Posterior vena cava (tissue), 2 donors: ENCODE measurements at regions of chr6 and their contacts with region 1.

Region 1: DNA sequence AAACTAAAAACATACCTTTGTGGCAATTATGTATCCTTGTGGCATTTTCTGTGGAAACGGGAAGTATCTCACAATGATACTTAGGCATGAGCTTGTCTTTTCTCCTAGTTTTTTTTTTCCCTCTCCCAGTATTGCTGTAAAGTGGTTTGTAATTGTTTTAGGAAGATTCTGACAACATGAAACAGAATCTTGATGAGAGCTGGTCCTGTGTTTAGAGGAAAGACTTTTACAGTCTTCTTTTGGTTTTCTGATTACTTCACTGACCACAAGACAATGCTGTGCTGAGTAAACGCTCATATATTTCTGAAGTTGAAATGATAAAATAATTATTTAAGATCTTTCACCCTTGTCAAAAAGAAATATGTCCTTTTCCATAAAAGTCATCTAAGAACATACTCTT is 201.2 kb downstream of the FOXC1 start:
- DNase-seq: no peak

Region 2: GRCh38 chr6:617445-618100 is 1193.3 kb before region 1 on chr6:
- intact Hi-C with region 1: no loop called
- DNase-seq: no peak

Region 3: DNA sequence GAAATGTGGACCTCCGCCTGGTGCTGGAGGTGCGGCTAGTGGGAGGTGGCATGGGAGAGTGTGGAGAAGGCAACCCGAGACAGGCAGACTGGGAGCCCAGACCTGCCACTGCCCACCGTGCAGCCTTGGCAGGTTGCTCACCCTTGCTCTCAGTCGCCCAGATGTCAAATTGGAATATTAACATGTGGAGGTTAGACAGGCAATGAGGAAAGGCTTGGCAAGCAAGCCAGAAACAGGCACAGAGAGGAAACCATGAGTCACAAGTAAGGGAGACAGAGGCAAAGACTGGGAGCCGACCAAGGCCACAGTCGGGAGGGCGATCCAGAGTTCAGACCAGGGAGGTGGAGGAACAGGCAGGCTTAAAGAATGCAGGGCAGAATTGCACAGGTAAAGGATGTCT is 23.0 kb before region 1 on chr6:
- intact Hi-C with region 1: loop called in 1 of 2 experiments (anchors 1 kb)
- DNase-seq: no peak

Region 4: GRCh38 chr6:2448820-2449571 is 638.1 kb after region 1 on chr6:
- intact Hi-C with region 1: no loop called
- DNase-seq: no peak